Activated naive CD4-positive, alpha-beta T cell treated with anti-CD3 and anti-CD28 coated beads for 36 hours (primary cell): ENCODE measurements at regions of chr12 and their contacts with region 1.

Region 1: GRCh38 chr12:111599459-111600204 is 517 bp upstream of the ATXN2 start:
- DNase-seq: peak; percentile 83
- H3K4me3 Mint-ChIP-seq: peak overlapping the region; percentile 83
- H3K27ac Mint-ChIP-seq: peak overlapping the region; percentile 85
- H3K4me1 Mint-ChIP-seq: peaks cover 25% of the 10 kb centered on the region
- H3K27me3 Mint-ChIP-seq: no peaks in the 10 kb centered on the region

Region 2: DNA sequence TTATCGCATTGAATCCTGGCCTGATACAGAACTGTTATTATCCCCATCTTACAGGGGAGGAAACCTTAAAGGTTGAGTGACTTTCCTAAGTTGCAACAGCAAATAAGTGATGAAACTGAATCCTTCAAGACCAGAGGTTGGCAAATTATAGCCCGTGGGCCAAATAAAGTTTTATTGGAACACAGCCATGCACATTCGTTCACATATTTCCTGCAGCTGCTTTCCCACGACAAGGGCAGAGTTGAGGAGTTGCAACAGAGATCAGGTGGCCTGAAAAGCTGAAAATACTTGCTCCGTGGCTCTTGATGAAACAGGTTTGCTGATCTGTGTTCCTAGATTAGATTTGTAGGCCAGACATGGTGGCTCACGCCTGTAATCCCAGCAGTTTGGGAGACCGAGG is 357.4 kb before region 1 on chr12:
- CTCF ChIA-PET with region 1: no interaction called
- intact Hi-C with region 1: no loop called
- DNase-seq: no peak
- H3K4me3 Mint-ChIP-seq: no peak overlapping the region
- H3K27ac Mint-ChIP-seq: no peak overlapping the region
- H3K4me1 Mint-ChIP-seq: no peaks in the 10 kb centered on the region
- H3K27me3 Mint-ChIP-seq: no peaks in the 10 kb centered on the region

Region 3: GRCh38 chr12:111287125-111287900 is 312.3 kb before region 1 on chr12:
- CTCF ChIA-PET with region 1: no interaction called
- intact Hi-C with region 1: no loop called
- DNase-seq: no peak
- H3K4me3 Mint-ChIP-seq: no peak overlapping the region
- H3K27ac Mint-ChIP-seq: no peak overlapping the region
- H3K4me1 Mint-ChIP-seq: no peaks in the 10 kb centered on the region
- H3K27me3 Mint-ChIP-seq: no peaks in the 10 kb centered on the region

Region 4: DNA sequence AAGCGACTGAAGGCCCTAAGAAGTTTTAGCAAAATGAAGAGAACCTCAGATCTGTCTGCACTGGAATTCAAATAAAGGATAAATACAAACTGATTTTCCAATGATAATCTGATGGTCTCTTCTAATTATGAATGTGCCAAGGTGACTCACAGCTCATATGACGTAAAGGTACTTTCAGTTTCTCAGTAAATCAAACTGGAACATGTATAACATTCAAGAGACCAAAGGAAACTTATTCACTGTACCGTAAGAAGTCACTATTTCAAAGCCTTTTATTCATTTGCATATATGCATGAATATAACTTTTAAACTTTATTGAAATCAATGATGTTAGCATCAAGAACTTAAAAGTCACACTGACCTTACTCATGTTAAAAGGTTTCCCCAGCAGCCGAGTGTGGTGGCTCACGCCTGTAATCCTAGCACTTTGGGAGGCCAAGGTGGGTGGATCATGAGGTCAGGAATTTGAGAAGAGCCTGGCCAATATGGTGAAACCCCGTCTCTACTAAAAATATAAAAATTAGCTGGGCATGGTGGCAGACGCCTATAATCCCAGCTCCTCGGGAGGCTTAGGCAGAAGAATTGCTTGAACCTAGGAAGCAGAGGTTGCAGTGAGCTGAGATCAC is 52.8 kb before region 1 on chr12:
- CTCF ChIA-PET with region 1: no interaction called
- intact Hi-C with region 1: loop called (anchors 5 kb)
- DNase-seq: peak; percentile 54
- H3K4me3 Mint-ChIP-seq: no peak overlapping the region
- H3K27ac Mint-ChIP-seq: peak overlapping the region; percentile 51
- H3K4me1 Mint-ChIP-seq: peaks cover 20% of the 10 kb centered on the region
- H3K27me3 Mint-ChIP-seq: no peaks in the 10 kb centered on the region

Region 5: DNA sequence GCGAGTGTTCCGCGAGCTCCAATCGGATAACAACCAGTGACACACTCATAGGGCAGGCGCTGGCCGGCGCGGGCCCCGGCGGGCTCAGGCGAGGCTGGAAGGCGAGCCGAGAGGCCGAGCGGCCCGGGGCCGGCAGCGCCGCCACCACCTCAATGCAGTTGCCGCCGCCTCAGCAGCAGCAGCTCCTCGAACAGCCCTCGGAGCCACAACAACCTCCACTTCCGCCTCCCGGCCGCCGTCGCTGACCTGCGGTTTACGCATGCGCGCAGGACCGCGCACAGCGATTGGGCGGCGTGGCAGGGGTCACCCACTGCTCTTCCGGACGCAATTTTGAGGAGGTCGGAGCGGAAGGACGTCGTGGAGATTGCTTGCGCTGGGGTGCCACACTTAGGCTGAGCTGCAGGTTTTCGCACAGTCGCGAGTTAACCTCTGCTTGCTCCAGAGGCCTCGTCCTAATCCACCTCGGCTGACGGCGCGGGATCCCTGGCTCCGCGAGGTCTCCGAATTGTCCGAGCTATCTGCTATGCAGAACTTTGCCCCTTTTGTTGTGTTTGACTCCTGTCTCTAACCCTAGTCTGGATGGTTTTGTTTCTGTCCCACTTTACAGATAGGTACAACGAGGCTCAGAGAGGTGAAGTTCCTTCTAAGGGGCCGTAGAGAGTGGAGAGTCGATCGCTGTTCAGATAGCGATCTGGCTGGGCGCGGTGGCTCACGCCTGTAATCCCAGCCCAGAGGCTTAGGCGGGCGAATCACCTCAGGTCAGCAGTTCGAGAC is 86.3 kb after region 1 on chr12 and contains the starts of genes ACAD10 and BRAP:
- CTCF ChIA-PET with region 1: no interaction called
- intact Hi-C with region 1: loop called (anchors 2 kb)
- DNase-seq: peak; percentile 94
- H3K4me3 Mint-ChIP-seq: peak within 1 kb of the TSS; percentile 91
- H3K27ac Mint-ChIP-seq: peak within 1 kb of the TSS; percentile 86
- H3K4me1 Mint-ChIP-seq: peaks cover 33% of the 10 kb centered on the region
- H3K27me3 Mint-ChIP-seq: no peaks in the 10 kb centered on the region
- total RNA-seq, gene ACAD10: 19.0 to 21.7 TPM
- total RNA-seq, gene BRAP: 14.7 to 16.9 TPM

Region 6: GRCh38 chr12:112418608-112419298 is 819.1 kb after region 1 on chr12 and contains the start of gene PTPN11:
- CTCF ChIA-PET with region 1: no interaction called
- intact Hi-C with region 1: loop called (anchors 10 kb)
- DNase-seq: peak; percentile 90
- H3K4me3 Mint-ChIP-seq: peak within 1 kb of the TSS; percentile 95
- H3K27ac Mint-ChIP-seq: peak within 1 kb of the TSS; percentile 98
- H3K4me1 Mint-ChIP-seq: peaks cover 38% of the 10 kb centered on the region
- H3K27me3 Mint-ChIP-seq: no peaks in the 10 kb centered on the region
- total RNA-seq, gene PTPN11: 137 to 141 TPM